ENCODE measurements at regions of chr5 and their contacts with region 1.

Region 1: GRCh38 chr5:171418316-171418981 is 998 bp upstream of the FGF18 start:
- DNase-seq: peak; percentile 85
- ATAC-seq: peak; percentile 85

Region 2: GRCh38 chr5:171379961-171380360 is 38.5 kb before region 1 on chr5:
- intact Hi-C with region 1: no loop called
- DNase-seq: no peak
- ATAC-seq: no peak

Region 3: GRCh38 chr5:171484460-171484899 is 66.0 kb after region 1 on chr5:
- intact Hi-C with region 1: loop called (anchors 2 kb)
- DNase-seq: no peak
- ATAC-seq: peak; percentile 23

Region 4: DNA sequence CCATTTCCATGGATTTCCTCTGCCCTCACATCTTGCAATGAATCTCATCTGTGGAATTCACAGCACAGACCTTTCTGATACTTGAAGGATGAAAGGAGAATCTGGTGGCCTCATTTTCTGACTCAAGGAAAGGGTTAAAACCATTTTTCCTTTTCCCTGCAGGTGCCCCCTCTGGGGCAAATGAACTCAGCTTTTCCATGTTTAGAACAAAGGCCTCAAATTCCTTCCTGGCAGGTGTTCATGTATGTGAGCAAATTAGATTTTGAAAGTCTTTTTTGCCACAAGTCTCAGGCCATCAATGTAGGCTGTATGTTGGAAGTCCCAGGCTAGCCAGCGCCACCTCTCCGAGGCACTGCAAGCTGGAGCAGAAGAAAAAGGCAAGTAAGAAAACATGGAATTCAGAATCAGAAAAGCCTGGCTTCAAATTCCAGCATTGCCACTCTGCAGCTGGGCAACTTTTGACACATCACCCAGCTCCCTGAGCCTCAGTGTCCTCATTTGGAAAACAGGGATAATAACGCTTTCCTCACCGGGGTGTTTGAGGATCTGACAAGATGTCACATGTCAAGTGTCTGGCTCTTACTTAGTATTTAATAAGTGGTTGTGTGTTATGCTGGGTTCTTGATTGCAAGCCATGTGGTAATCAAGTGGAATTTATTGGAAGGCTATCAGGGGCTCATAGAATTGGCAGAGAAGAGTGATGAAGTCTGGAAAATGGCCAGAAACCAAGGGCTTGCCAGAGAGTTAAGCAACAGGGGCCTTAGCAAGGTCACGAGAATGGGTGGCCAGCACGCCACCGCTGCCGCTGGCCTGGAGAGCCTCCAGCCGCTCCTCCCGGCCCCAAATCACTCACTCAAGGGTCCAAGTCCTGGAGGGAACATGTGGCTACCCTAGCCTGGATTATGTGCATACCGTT is 318.8 kb after region 1 on chr5:
- intact Hi-C with region 1: loop called (anchors 5 kb)
- DNase-seq: no peak
- ATAC-seq: peak; percentile 88

Region 5: DNA sequence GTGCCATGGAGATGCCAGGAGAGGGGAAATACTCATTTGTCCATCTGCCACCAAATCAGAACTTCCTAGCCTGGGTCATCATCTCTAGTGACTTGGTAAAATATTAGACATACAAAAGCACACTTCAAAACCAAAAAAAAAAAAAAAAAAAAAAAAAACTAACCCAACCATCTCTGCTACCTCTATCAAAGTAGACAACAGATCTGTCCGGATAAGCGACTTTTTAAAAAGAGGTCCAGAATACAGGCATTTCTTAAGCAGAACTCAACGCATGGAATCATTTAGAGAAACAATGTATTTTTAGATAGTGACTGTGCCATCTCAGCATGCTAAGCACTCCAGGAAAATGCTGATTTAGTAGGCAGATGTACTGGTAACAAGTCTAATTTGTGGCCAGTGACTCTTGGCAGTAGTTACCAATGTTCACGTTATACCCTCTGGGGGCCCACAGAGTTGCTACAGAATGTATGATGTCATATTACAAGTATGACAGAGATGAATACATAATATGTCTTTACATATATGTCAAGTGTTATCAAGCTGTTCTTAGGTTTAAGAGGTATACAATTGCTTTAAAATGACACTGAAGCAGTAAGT is 474.9 kb after region 1 on chr5:
- intact Hi-C with region 1: loop called (anchors 5 kb)
- DNase-seq: no peak
- ATAC-seq: no peak

Region 6: GRCh38 chr5:172059661-172060100 is 641.2 kb after region 1 on chr5:
- intact Hi-C with region 1: loop called (anchors 10 kb)
- DNase-seq: no peak
- ATAC-seq: no peak